Natural killer cell (primary cell): ENCODE measurements at regions of chr2 and their contacts with region 1.

Region 1: GRCh38 chr2:26088032-26088643 is 54.3 kb downstream of the RAB10 start:
- DNase-seq: peak in 1 of 2 donors; percentile 62
- ATAC-seq: peak; percentile 60 to 76 (median 65)
- H3K4me3 ChIP-seq: no peak overlapping the region
- H3K4me3 Mint-ChIP-seq: no peak overlapping the region
- H3K27ac ChIP-seq: no peak overlapping the region
- H3K27ac Mint-ChIP-seq: no peak overlapping the region
- H3K4me1 ChIP-seq: peaks cover 4% of the 10 kb centered on the region
- H3K4me1 Mint-ChIP-seq: peaks cover 57 to 66% of the 10 kb centered on the region in 2 donors
- H3K27me3 ChIP-seq: no peaks in the 10 kb centered on the region
- H3K27me3 Mint-ChIP-seq: no peaks in the 10 kb centered on the region
- CTCF ChIP-seq: peak; percentile 83

Region 2: DNA sequence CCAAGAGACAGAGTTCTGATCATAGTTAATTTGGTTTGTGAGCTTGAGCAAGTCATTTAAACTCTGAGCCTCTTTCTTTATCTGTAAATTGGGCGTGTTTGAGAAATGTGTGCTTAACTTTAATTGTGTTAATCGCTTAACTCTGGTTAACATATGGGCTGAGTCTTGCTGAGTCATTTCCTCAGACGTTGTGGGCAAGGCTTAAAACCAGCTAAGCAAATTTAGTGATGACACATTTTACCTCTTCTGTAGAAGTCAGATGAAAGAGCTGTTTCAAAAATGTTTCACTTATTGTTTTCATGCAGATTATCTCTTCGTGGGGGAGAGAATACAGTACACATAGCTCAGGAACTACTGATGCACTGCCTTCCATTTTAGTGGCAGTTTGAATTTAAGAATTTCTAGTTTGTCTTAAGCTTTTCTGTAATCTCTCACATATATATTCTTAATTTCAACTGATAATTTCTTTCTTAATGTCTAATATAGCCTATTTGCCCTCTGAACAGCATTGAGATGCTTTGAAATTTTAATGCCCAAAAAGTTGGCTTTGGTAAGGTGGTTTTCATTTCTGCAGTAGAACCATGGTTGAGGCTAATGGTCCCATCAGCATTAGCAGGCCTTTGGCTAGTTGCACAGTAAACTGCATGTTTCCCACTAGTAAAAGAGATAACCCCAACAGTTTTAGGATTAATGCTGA is 19.4 kb before region 1 on chr2:
- intact Hi-C with region 1: loop called (anchors 2 kb)
- DNase-seq: peak in 1 of 2 donors; percentile 66
- ATAC-seq: peak; percentile 92 to 95 (median 93)
- H3K4me3 ChIP-seq: no peak overlapping the region
- H3K4me3 Mint-ChIP-seq: peak overlapping the region; percentile 59
- H3K27ac ChIP-seq: peak overlapping the region; percentile 40
- H3K27ac Mint-ChIP-seq: peak overlapping the region; percentile 61 to 86
- H3K4me1 ChIP-seq: peaks cover 16% of the 10 kb centered on the region
- H3K4me1 Mint-ChIP-seq: peaks cover 55 to 56% of the 10 kb centered on the region in 2 donors
- H3K27me3 ChIP-seq: no peaks in the 10 kb centered on the region
- H3K27me3 Mint-ChIP-seq: no peaks in the 10 kb centered on the region
- CTCF ChIP-seq: no peak

Region 3: GRCh38 chr2:26122630-26123029 is 34.5 kb after region 1 on chr2:
- intact Hi-C with region 1: loop called (anchors 5 kb)
- DNase-seq: no peak
- ATAC-seq: peak in 2 of 3 donors; percentile 28 to 32
- H3K4me3 ChIP-seq: no peak overlapping the region
- H3K4me3 Mint-ChIP-seq: peak overlapping the region; percentile 83
- H3K27ac ChIP-seq: no peak overlapping the region
- H3K27ac Mint-ChIP-seq: peak overlapping the region; percentile 86 to 91
- H3K4me1 ChIP-seq: peaks cover 12% of the 10 kb centered on the region
- H3K4me1 Mint-ChIP-seq: peaks cover 40 to 51% of the 10 kb centered on the region in 2 donors
- H3K27me3 ChIP-seq: no peaks in the 10 kb centered on the region
- H3K27me3 Mint-ChIP-seq: no peaks in the 10 kb centered on the region
- CTCF ChIP-seq: no peak

Region 4: DNA sequence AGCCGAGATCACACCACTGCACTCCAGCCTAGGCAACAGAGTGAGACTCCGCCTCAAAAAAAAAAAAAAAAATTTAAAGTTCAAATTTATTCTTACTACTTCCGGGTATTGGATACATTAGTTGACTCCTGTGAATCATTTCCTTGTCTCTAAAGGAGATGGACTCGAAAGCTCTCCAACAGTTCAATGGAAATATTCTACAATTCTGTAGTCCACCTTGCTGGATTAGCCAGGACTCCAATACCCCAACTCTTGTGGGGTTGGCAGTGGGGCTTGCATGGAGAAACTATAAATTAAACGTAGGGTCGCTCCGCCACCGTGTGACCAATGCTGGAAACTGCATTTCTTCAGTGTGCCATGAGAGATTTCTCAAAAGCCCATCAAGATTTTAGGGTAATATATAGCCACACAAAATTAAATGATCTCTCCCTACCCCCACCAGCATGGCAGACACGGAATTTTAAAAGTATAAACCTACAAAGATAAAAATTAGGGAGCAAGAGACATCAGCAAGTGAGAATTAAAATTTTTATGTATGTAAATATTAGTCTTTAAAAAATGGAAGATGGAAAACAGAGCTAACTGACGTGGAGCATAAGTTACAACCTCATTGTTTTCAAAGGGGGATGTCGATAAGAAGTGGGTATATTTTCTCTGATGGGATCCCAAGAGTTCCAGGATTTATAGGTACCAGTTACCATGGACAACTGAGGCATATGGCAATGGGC is 57.0 kb after region 1 on chr2:
- intact Hi-C with region 1: loop called (anchors 2 kb)
- DNase-seq: peak; percentile 42 to 78
- ATAC-seq: peak; percentile 71 to 91 (median 84)
- H3K4me3 ChIP-seq: no peak overlapping the region
- H3K4me3 Mint-ChIP-seq: no peak overlapping the region
- H3K27ac ChIP-seq: no peak overlapping the region
- H3K27ac Mint-ChIP-seq: no peak overlapping the region
- H3K4me1 ChIP-seq: no peaks in the 10 kb centered on the region
- H3K4me1 Mint-ChIP-seq: peaks cover 5% of the 10 kb centered on the region in 2 donors
- H3K27me3 ChIP-seq: no peaks in the 10 kb centered on the region
- H3K27me3 Mint-ChIP-seq: peaks cover 3 to 8% of the 10 kb centered on the region in 2 donors
- CTCF ChIP-seq: peak; percentile 72

Region 5: GRCh38 chr2:26184555-26185303 is 96.6 kb after region 1 on chr2:
- intact Hi-C with region 1: loop called (anchors 2 kb)
- DNase-seq: peak; percentile 85 to 96
- ATAC-seq: peak; percentile 97 to 98 (median 98)
- H3K4me3 ChIP-seq: peak overlapping the region; percentile 51
- H3K4me3 Mint-ChIP-seq: peak overlapping the region; percentile 82
- H3K27ac ChIP-seq: peak overlapping the region; percentile 42
- H3K27ac Mint-ChIP-seq: peak overlapping the region in 1 of 2 donors; percentile 75
- H3K4me1 ChIP-seq: peaks cover 16% of the 10 kb centered on the region
- H3K4me1 Mint-ChIP-seq: peaks cover 6 to 19% of the 10 kb centered on the region in 2 donors
- H3K27me3 ChIP-seq: no peaks in the 10 kb centered on the region
- H3K27me3 Mint-ChIP-seq: peaks cover 14 to 18% of the 10 kb centered on the region in 2 donors
- CTCF ChIP-seq: peak; percentile 61

Region 6: DNA sequence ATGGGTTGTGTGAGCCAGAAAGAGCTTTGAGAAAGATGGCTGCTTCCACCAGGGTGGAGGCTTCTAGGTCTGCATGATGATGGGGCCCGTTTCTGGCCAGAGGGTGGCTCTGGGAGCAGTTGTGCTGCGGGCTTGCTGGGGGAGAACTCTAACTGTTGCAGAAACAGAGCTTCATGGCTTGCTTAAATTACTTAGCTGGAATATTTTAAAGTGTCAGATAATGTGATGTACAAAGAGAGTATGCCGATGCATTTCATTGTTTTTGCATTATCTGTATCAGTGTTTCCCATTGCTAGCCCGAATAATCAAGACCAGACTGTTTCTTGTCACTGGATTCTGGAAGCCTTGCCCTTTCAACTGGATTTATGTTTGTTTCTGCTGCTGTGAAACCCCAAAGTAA is 307.3 kb after region 1 on chr2:
- intact Hi-C with region 1: no loop called
- DNase-seq: no peak
- ATAC-seq: no peak
- H3K4me3 ChIP-seq: no peak overlapping the region
- H3K4me3 Mint-ChIP-seq: no peak overlapping the region
- H3K27ac ChIP-seq: no peak overlapping the region
- H3K27ac Mint-ChIP-seq: no peak overlapping the region
- H3K4me1 ChIP-seq: no peaks in the 10 kb centered on the region
- H3K4me1 Mint-ChIP-seq: peaks cover 5 to 10% of the 10 kb centered on the region in 2 donors
- H3K27me3 ChIP-seq: no peaks in the 10 kb centered on the region
- H3K27me3 Mint-ChIP-seq: no peaks in the 10 kb centered on the region
- CTCF ChIP-seq: no peak